K562 (cell line): ENCODE measurements at regions of chr19 and their contacts with region 1.

Region 1: GRCh38 chr19:7680606-7681339 is at the start of gene TRAPPC5:
- DNase-seq: peak; percentile 89 to 96 (median 94)
- ATAC-seq: peak; percentile 86
- H3K4me3 ChIP-seq: peak within 1 kb of the TSS; percentile 95
- H3K27ac ChIP-seq: peak within 1 kb of the TSS; percentile 79
- H3K4me1 ChIP-seq: peaks cover 10 to 26% of the 10 kb centered on the region in 2 experiments; a peak in 4 of 5 replicates
- H3K27me3 ChIP-seq: 0 out of 5 replicates have a peak, but pooled peaks cover 0 to 8% of the 10 kb centered on the region in 2 experiments
- CTCF ChIP-seq: peak; percentile 84 to 94 (median 92)
- EP300 ChIP-seq: no peak
- POLR2A ChIP-seq: peak; percentile 58; the same call in 1 of the 2 replicates
- RAD21 ChIP-seq: peak; percentile 97 to 98
- polyA plus RNA-seq, gene TRAPPC5: 2.0 to 4.2 TPM

Region 2: GRCh38 chr19:7349961-7350711 is 330.6 kb before region 1 on chr19:
- CTCF ChIA-PET with region 1: interaction called, 3 read pairs
- POLR2A ChIA-PET with region 1: interaction called, 3 read pairs
- in situ Hi-C with region 1: loop called (anchors 10 kb)
- intact Hi-C with region 1: loop called (anchors 10 kb)
- DNase-seq: no peak
- ATAC-seq: no peak
- H3K4me3 ChIP-seq: no peak overlapping the region
- H3K27ac ChIP-seq: no peak overlapping the region
- H3K4me1 ChIP-seq: no peaks in the 10 kb centered on the region
- H3K27me3 ChIP-seq: peaks cover 6 to 36% of the 10 kb centered on the region in 2 experiments; a peak in 3 of 5 replicates
- CTCF ChIP-seq: no peak
- EP300 ChIP-seq: no peak
- POLR2A ChIP-seq: no peak
- RAD21 ChIP-seq: no peak

Region 3: DNA sequence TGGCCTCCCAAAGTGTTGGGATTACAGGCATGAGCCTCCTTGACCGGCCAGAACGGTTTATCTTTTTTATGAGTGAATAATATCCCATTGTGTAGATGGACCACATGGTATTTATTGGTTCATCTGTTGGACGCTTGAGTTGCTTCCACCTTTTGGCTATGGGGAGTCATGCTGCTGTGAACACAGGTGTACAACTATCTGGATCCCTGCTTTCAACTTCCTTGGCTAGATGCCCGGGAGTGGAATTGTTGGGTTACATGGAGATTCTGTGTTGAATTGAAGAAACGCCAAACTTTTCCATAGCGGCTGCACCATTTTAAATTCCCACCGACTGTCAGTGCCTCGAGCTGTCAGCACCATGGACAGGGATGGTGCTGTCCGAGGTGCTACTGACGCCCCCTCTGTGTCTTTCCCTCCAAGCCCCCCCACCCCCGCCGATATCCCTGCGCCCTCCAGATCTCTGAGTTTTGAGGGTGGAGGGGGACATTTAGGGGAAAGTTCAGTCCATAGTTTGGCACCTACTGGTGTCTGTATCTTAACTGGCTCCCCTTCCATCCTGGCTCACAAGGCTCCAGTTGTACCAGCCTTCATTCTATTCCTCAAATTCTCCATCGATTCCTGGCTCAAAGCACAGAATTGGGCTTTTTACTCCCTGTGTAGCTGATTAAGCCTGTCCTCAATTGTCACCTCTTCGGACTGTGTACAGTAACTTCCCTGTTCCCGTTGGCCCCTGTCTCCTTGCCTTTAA is 118.0 kb before region 1 on chr19:
- CTCF ChIA-PET with region 1: interaction called, 28 read pairs
- POLR2A ChIA-PET with region 1: interaction called, 3 read pairs
- in situ Hi-C with region 1: loop called (anchors 5 kb)
- intact Hi-C with region 1: loop called (anchors 2 kb)
- DNase-seq: peak; percentile 56 to 76 (median 70)
- ATAC-seq: peak; percentile 63; the same call in 1 of the 3 replicates
- H3K4me3 ChIP-seq: no peak overlapping the region
- H3K27ac ChIP-seq: no peak overlapping the region
- H3K4me1 ChIP-seq: peaks cover 0 to 9% of the 10 kb centered on the region in 2 experiments; a peak in 2 of 5 replicates
- H3K27me3 ChIP-seq: no peaks in the 10 kb centered on the region; a peak in 1 of 5 replicates
- CTCF ChIP-seq: no peak
- EP300 ChIP-seq: no peak
- POLR2A ChIP-seq: no peak
- RAD21 ChIP-seq: no peak

Region 4: GRCh38 chr19:7652061-7652641 is 28.6 kb before region 1 on chr19:
- CTCF ChIA-PET with region 1: interaction called, 6 read pairs
- POLR2A ChIA-PET with region 1: no interaction called
- in situ Hi-C with region 1: no loop called
- intact Hi-C with region 1: loop called (anchors 2 kb)
- DNase-seq: peak; percentile 79 to 92 (median 84)
- ATAC-seq: peak; percentile 88
- H3K4me3 ChIP-seq: no peak overlapping the region
- H3K27ac ChIP-seq: peak overlapping the region; percentile 49; the same call in 1 of the 3 replicates
- H3K4me1 ChIP-seq: peaks cover 2 to 11% of the 10 kb centered on the region in 2 experiments; a peak in 3 of 5 replicates
- H3K27me3 ChIP-seq: no peaks in the 10 kb centered on the region
- CTCF ChIP-seq: peak; percentile 88 to 99 (median 96)
- EP300 ChIP-seq: peak; percentile 70
- POLR2A ChIP-seq: no peak
- RAD21 ChIP-seq: peak; percentile 71 to 79

Region 5: GRCh38 chr19:7670150-7670783 is 10.5 kb before region 1 on chr19:
- CTCF ChIA-PET with region 1: no interaction called
- POLR2A ChIA-PET with region 1: no interaction called
- in situ Hi-C with region 1: no loop called
- intact Hi-C with region 1: no loop called
- DNase-seq: peak in 2 of 4 experiments; percentile 51
- ATAC-seq: peak; percentile 32; the same call in 1 of the 3 replicates
- H3K4me3 ChIP-seq: no peak overlapping the region
- H3K27ac ChIP-seq: no peak overlapping the region
- H3K4me1 ChIP-seq: peaks cover 0 to 10% of the 10 kb centered on the region in 2 experiments; a peak in 2 of 5 replicates
- H3K27me3 ChIP-seq: peaks cover 21 to 39% of the 10 kb centered on the region in 2 experiments; a peak in 4 of 5 replicates
- CTCF ChIP-seq: no peak
- EP300 ChIP-seq: no peak
- POLR2A ChIP-seq: no peak
- RAD21 ChIP-seq: no peak